Dendritic cell treated with granulocyte-macrophage colony-stimulating factor and Interleukin-4, amounts not matched to agents 40 ng/mL and 50 ng/mL, for 4 days (primary cell): ENCODE measurements at regions of chr19 and their contacts with region 1.

Region 1: GRCh38 chr19:31356587-31357314 is 7.5 kb upstream of the TSHZ3 start:
- H3K4me3 Mint-ChIP-seq: peak overlapping the region; percentile 30
- H3K27ac Mint-ChIP-seq: no peak overlapping the region
- H3K4me1 Mint-ChIP-seq: peaks cover 45% of the 10 kb centered on the region
- H3K27me3 Mint-ChIP-seq: peaks cover 84% of the 10 kb centered on the region

Region 2: DNA sequence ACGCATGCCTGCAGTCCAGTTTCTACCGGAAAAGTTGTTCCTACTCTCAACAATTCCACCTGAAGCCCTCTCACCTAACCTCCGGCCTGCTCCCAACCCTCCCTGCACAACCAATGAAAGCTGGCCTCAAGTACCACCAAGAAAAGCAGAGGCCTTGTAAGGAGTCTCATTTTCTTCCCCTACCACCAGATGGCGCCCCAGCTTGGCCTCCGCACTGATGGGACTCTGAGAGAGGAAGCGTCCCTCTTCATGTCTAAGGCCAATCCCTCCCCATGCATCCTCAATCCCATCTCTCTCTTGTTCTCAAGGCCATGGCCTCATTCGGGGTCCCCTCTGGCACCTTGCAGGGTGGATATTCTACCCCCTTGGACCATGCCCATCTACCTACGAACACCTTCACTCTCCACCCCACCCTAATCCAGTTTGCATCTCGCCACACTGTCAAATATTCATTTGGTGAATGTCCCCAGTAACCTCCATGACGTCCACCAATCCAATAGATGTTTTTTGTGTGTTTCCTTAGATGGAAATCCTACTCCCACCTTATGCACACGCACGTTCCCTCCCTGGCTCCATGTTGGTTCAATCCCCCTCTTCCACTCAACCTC is 571.8 kb before region 1 on chr19:
- intact Hi-C with region 1: loop called (anchors 1 kb)
- H3K4me3 Mint-ChIP-seq: no peak overlapping the region
- H3K27ac Mint-ChIP-seq: no peak overlapping the region
- H3K4me1 Mint-ChIP-seq: peaks cover 26% of the 10 kb centered on the region
- H3K27me3 Mint-ChIP-seq: peaks cover 3% of the 10 kb centered on the region

Region 3: GRCh38 chr19:31054430-31054829 is 302.3 kb before region 1 on chr19:
- intact Hi-C with region 1: loop called (anchors 2 kb)
- H3K4me3 Mint-ChIP-seq: no peak overlapping the region
- H3K27ac Mint-ChIP-seq: no peak overlapping the region
- H3K4me1 Mint-ChIP-seq: no peaks in the 10 kb centered on the region
- H3K27me3 Mint-ChIP-seq: peaks cover 4% of the 10 kb centered on the region

Region 4: DNA sequence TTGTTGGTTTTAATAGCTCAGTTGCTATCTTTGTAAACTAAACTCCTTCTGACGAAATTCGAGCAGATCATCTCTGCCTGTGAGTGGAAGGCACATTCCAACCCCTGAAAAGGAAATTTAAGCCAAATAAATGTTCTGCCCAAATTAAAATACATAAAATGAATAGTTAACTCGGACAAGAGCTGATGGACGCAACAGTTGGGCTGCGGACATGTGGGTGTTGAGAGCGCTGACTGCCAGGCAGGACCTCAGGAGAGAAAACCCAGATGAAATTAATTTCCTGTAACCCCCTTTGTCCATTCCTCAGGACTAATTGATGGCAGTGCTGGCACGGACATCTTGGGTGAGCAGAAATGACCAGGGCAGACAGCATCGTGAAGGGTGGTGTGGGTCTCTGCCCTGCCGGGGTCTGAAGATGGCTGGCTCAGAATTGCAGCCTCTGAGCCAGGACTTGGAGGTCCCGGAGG is 94.0 kb before region 1 on chr19:
- intact Hi-C with region 1: loop called (anchors 5 kb)
- H3K4me3 Mint-ChIP-seq: no peak overlapping the region
- H3K27ac Mint-ChIP-seq: no peak overlapping the region
- H3K4me1 Mint-ChIP-seq: peaks cover 13% of the 10 kb centered on the region
- H3K27me3 Mint-ChIP-seq: peaks cover 15% of the 10 kb centered on the region

Region 5: GRCh38 chr19:31408460-31409124 is 51.8 kb after region 1 on chr19:
- intact Hi-C with region 1: no loop called
- H3K4me3 Mint-ChIP-seq: no peak overlapping the region
- H3K27ac Mint-ChIP-seq: no peak overlapping the region
- H3K4me1 Mint-ChIP-seq: peaks cover 14% of the 10 kb centered on the region
- H3K27me3 Mint-ChIP-seq: no peaks in the 10 kb centered on the region